ENCODE measurements at regions of chr4 and their contacts with region 1.

Region 1: GRCh38 chr4:139786494-139787354 is 121.1 kb downstream of the MGST2 start:
- DNase-seq: no peak
- H3K4me3 ChIP-seq: no peak overlapping the region
- H3K27ac ChIP-seq: no peak overlapping the region
- H3K4me1 ChIP-seq: no peaks in the 10 kb centered on the region
- H3K27me3 ChIP-seq: no peaks in the 10 kb centered on the region
- CTCF ChIP-seq: no peak

Region 2: GRCh38 chr4:139163806-139164206 is 622.9 kb before region 1 on chr4:
- intact Hi-C with region 1: no loop called
- DNase-seq: no peak
- H3K4me3 ChIP-seq: no peak overlapping the region
- H3K27ac ChIP-seq: no peak overlapping the region
- H3K4me1 ChIP-seq: peaks cover 0 to 30% of the 10 kb centered on the region in 2 donors
- H3K27me3 ChIP-seq: no peaks in the 10 kb centered on the region
- CTCF ChIP-seq: no peak

Region 3: DNA sequence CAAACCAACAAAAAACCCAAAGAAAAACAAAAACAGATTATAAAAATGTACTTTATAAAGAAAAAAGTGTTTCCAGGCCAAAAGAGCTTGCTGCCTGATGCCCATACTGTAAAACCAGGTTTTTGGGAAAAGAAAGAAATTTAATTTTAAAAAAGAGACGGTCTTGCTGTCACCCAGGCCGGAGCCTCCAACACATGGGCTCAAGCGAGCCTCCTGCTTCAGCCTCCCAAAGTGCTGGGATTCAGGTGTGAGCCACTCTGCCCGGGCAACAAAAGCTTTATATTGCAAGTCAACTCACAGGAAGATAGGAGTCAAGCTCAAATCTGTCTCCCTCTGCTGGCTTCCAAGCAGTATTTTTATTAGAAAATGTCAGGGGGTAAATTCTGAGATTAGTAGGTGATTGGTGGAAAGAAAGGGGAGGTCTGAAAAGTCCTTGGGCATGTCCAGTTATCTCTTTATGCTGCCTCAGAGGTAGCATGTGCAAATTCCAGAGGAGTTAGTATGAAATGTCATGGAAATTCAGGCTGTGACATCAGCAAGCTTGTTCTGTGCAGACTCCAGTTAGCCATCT is 81.7 kb before region 1 on chr4:
- intact Hi-C with region 1: no loop called
- DNase-seq: no peak
- H3K4me3 ChIP-seq: no peak overlapping the region
- H3K27ac ChIP-seq: no peak overlapping the region
- H3K4me1 ChIP-seq: no peaks in the 10 kb centered on the region
- H3K27me3 ChIP-seq: no peaks in the 10 kb centered on the region
- CTCF ChIP-seq: no peak

Region 4: DNA sequence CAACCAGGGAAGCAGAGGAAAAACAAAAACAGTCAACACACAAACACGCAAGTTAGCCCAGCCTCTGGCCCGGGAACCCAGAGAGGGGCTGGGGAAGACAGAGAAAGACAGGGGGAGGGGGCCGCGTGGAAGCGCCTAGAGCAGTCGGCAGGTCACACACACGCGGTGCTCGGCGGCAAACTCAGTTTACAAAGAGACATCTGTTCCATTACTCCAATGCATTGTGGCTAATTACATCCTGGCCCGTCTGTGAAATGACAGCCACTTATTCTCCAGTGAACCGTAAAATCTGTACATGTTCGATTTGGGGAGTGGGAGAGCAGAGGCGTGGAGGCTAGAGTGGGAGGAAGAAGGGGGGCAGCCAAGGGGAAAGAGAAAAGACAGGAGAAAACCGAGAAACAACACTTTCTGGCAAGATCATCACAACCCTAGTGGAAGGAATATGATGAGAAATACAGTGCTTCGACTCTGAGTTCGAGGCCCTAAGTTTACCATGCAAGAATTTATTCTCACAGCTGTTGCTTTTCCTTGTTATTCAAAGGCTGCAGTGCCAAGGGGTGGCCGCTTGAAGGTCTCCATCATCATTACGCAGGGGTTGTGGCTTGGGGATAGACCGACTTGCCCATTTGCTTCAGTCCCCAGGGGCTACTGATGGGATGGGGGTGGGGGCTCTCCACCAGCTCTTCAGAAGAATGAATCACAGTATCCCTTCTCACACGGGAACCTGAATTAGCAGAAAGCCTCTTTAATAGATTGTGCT is 46.6 kb after region 1 on chr4:
- intact Hi-C with region 1: loop called (anchors 5 kb)
- DNase-seq: no peak
- H3K4me3 ChIP-seq: no peak overlapping the region
- H3K27ac ChIP-seq: no peak overlapping the region
- H3K4me1 ChIP-seq: no peaks in the 10 kb centered on the region
- H3K27me3 ChIP-seq: no peaks in the 10 kb centered on the region
- CTCF ChIP-seq: no peak

Measured in ascending aorta (tissue), 2 donors.